Right lobe of liver (tissue), 6 donors: ENCODE measurements at regions of chr19 and their contacts with region 1.

Region 1: GRCh38 chr19:12757544-12758274 is 6.1 kb downstream of the BEST2 start:
- DNase-seq: peak; percentile 76 to 82 (median 78)
- ATAC-seq: peak; percentile 90 to 96 (median 93)
- H3K4me3 ChIP-seq: peak overlapping the region; percentile 32 to 50 (median 36)
- H3K27ac ChIP-seq: no peak overlapping the region
- H3K4me1 ChIP-seq: peaks cover 0 to 11% (median 3%) of the 10 kb centered on the region in 4 donors
- H3K27me3 ChIP-seq: no peaks in the 10 kb centered on the region
- CTCF ChIP-seq: peak; percentile 95 to 98 (median 97)
- POLR2A ChIP-seq: no peak

Region 2: DNA sequence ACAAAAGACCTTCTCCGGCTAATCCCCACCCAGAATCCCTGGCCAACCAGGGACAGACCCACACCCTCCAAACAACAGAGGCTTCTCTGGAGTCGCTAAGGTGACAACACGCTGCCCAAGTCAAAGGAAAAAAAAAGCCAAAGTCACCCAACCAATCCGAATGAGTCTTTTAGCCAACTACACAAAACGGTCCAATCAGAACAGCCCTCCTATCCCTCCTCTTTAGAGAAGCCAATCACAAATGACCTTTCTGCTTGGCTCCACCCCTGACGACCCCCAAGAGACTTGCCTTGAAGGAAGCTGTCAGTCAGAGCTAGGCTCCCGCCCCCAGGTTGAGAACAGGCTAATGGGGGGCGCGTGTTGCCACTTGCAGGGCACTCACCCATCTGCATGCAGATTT is 54.7 kb before region 1 on chr19:
- intact Hi-C with region 1: loop called in 1 of 2 experiments (anchors 10 kb)
- DNase-seq: no peak
- ATAC-seq: peak in 1 of 4 donors; percentile 9
- H3K4me3 ChIP-seq: no peak overlapping the region
- H3K27ac ChIP-seq: no peak overlapping the region
- H3K4me1 ChIP-seq: no peaks in the 10 kb centered on the region
- H3K27me3 ChIP-seq: no peaks in the 10 kb centered on the region
- CTCF ChIP-seq: no peak
- POLR2A ChIP-seq: no peak

Region 3: DNA sequence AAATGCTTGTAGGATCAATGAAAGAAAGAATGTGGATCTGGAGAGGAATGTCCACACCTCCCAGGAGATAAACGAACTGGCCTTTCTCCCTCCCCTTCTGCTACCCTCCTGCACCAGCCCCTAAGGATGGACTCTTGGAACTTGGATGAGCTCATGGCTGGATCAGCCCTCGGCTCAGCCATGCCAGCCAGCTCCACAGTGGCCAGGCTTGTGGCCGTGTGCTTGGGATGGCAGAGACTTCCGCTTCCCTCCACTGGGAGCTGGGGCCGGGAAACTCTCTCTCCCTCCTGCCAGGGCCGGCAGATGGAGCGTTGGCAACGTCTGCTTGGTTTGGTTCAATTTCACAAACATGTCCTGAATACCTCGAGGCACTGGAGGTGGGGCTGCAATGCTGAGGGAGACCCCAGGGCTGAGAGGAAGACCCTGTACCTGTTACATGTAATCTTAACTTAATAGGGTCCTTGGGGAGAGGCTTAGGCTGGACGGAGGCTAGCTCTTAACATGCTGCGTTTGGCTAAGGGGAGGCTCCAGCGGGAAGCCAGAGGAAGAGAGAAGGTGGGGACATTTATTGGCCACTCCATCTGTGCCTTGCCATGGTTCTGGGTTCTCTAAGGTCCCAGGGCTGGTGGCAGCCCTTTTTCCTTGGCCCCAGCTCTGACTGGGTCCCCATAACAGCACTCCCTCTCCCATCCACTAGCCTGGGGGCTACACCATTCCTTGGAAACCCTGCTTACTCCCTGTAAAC is 545.0 kb after region 1 on chr19:
- intact Hi-C with region 1: no loop called
- DNase-seq: no peak
- ATAC-seq: peak in 2 of 4 donors; percentile 16 to 22
- H3K4me3 ChIP-seq: no peak overlapping the region
- H3K27ac ChIP-seq: no peak overlapping the region
- H3K4me1 ChIP-seq: no peaks in the 10 kb centered on the region
- H3K27me3 ChIP-seq: no peaks in the 10 kb centered on the region
- CTCF ChIP-seq: no peak
- POLR2A ChIP-seq: no peak